ENCODE measurements at regions of chr20 and their contacts with region 1.

Region 1: GRCh38 chr20:40563296-40563944 is 125.6 kb downstream of the MAFB start:
- DNase-seq: peak; percentile 98
- H3K4me3 Mint-ChIP-seq: no peak overlapping the region
- H3K27ac Mint-ChIP-seq: peak overlapping the region; percentile 4
- H3K4me1 Mint-ChIP-seq: peaks cover 32% of the 10 kb centered on the region
- H3K27me3 Mint-ChIP-seq: peaks cover 5% of the 10 kb centered on the region
- CTCF ChIP-seq: no peak

Region 2: DNA sequence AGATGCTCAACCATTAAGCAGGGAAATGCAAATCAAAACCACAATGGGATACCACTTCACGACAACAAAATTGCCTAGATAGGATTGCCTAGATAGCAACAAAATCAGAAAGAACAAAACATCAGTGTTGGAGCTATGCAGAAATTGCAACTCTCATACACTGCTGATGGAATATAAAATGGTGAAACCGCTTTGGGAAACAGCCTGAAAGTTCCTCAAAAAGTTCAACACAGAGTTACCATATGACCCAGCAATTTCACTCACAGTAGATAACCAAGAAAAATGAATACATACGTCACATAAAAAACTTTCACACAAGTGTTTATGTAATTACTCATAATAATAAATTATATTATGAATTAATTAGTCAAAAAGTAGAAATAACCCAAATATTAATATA is 47.3 kb after region 1 on chr20:
- CTCF ChIA-PET with region 1: no interaction called
- intact Hi-C with region 1: loop called (anchors 5 kb)
- DNase-seq: no peak
- H3K4me3 Mint-ChIP-seq: no peak overlapping the region
- H3K27ac Mint-ChIP-seq: no peak overlapping the region
- H3K4me1 Mint-ChIP-seq: no peaks in the 10 kb centered on the region
- H3K27me3 Mint-ChIP-seq: peaks cover 16% of the 10 kb centered on the region
- CTCF ChIP-seq: no peak

Region 3: DNA sequence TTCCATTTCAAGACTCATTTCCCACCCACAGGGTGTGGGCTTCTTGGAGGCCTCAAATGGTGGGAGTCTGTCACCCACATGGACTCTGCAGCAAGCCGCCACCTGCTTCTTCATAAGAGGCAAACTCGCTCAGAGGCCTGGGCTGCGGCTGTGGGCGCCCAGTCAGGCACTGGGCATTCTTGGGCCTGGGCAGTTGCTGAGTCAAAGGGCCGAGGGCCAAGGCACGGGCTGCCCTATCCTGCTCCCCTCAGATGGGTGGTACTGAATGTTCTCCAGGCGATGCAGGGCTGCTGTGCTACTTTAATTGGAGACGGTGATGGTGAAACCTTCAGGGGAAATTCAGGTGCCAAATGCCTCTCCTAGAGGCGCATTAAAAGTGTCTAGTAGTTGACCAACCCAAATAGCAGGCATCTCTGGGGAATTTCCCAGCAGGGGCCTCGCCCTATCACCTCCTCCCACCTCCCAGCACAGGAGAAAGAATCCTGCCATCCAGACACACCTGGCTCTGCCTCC is 67.8 kb after region 1 on chr20:
- CTCF ChIA-PET with region 1: no interaction called
- intact Hi-C with region 1: loop called (anchors 2 kb)
- DNase-seq: no peak
- H3K4me3 Mint-ChIP-seq: no peak overlapping the region
- H3K27ac Mint-ChIP-seq: no peak overlapping the region
- H3K4me1 Mint-ChIP-seq: no peaks in the 10 kb centered on the region
- H3K27me3 Mint-ChIP-seq: peaks cover 74% of the 10 kb centered on the region
- CTCF ChIP-seq: no peak

Region 4: GRCh38 chr20:40641202-40641601 is 77.8 kb after region 1 on chr20:
- CTCF ChIA-PET with region 1: no interaction called
- intact Hi-C with region 1: no loop called
- DNase-seq: no peak
- H3K4me3 Mint-ChIP-seq: no peak overlapping the region
- H3K27ac Mint-ChIP-seq: no peak overlapping the region
- H3K4me1 Mint-ChIP-seq: no peaks in the 10 kb centered on the region
- H3K27me3 Mint-ChIP-seq: peaks cover 64% of the 10 kb centered on the region
- CTCF ChIP-seq: no peak

Region 5: DNA sequence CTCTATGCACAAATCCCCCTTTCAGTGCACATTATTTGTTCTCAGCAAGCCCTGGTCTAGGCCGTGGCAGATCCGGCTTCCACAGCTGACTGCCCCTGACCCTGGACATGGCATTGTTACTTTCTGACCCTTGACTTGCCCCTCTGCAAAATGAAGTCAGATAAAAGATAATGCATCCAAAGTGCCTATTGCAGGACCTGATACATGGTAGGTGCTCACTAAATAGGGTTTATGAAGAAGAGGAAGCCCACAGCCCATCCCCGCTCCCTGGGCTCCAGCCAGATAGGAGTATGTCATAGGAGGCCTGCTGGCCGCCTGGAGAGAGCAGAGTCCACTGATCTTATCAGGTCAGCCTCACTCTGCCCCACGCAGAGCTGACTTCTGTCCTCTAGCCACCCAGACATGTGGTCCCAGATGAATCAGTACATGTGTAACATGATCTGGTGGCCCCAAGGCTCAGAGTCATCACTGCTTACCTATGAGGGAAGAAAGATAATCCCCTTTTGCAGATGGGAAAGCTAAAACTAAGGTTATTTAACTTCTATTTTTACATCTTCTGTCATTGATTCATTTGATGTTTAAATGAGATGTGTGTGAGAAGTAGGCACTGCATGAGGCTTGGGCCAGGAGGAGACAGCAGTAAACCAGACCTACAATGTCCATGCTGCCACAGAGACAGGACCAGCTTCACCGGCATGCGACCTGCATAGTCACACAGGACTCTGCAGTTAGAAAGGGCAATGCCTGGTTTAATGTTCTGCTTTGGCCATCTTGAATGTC is 105.2 kb after region 1 on chr20:
- CTCF ChIA-PET with region 1: no interaction called
- intact Hi-C with region 1: loop called (anchors 2 kb)
- DNase-seq: peak; percentile 40
- H3K4me3 Mint-ChIP-seq: no peak overlapping the region
- H3K27ac Mint-ChIP-seq: no peak overlapping the region
- H3K4me1 Mint-ChIP-seq: peaks cover 9% of the 10 kb centered on the region
- H3K27me3 Mint-ChIP-seq: peaks cover 3% of the 10 kb centered on the region
- CTCF ChIP-seq: no peak

Measured in Calu3 (cell line).